Endothelial cell of umbilical vein (primary cell): ENCODE measurements at regions of chr1 and their contacts with region 1.

Region 1: DNA sequence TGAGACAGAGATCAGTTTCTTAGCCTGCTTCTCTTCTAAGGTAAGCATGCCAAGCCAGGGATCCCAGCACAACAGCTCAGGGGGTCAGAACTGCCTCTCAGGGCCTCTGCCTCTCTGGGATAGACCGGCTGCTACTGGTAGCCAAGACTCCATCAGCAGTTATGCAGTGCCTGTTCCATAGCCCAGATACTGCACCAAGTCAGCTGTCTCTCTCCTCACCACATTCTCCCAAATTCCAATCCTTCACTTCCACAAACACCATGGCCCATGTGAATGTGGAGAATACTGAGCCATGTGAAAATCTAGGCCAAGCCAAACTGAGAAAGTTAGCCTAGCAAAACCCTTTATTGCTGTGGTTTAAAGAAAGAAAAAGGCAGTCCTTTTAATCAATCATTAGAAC is 37.5 kb downstream of the CDC42BPA start:
- DNase-seq: no peak
- H3K4me3 ChIP-seq: no peak overlapping the region
- H3K27ac ChIP-seq: no peak overlapping the region
- H3K4me1 ChIP-seq: no peaks in the 10 kb centered on the region
- H3K27me3 ChIP-seq: no peaks in the 10 kb centered on the region
- CTCF ChIP-seq: no peak
- POLR2A ChIP-seq: no peak

Region 2: DNA sequence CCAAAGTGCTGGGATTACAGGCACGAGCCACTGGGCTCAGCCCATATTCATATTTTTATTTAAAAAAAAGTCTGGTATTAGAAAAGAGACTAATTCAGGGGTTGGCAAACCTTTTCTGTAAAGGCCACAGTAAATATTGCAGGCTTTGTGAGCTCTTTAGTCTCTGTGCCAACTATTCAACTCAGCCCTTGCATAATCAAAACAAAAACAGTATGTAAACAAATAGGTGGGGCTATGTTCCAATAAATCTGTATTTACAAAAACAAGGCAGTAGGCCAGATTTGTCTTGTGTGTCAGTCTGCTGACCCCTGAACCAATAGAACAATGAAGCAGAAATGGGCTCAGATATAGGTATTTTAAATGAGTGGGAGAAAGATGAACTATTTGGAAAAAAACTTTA is 11.9 kb before region 1 on chr1:
- CTCF ChIA-PET with region 1: interaction called, 5 read pairs
- POLR2A ChIA-PET with region 1: no interaction called
- dilution Hi-C with region 1: no loop called
- intact Hi-C with region 1: loop called (anchors 1 kb)
- DNase-seq: peak; percentile 25
- H3K4me3 ChIP-seq: no peak overlapping the region
- H3K27ac ChIP-seq: no peak overlapping the region
- H3K4me1 ChIP-seq: peaks cover 5% of the 10 kb centered on the region
- H3K27me3 ChIP-seq: no peaks in the 10 kb centered on the region
- CTCF ChIP-seq: no peak
- POLR2A ChIP-seq: no peak